ENCODE measurements at regions of chr17 and their contacts with region 1.

Region 1: GRCh38 chr17:35088881-35089585 is 25.5 kb upstream of the RFFL start:
- DNase-seq: peak; percentile 89
- H3K4me3 Mint-ChIP-seq: peak overlapping the region; percentile 86
- H3K27ac Mint-ChIP-seq: peak overlapping the region; percentile 96
- H3K4me1 Mint-ChIP-seq: peaks cover 48% of the 10 kb centered on the region
- H3K27me3 Mint-ChIP-seq: no peaks in the 10 kb centered on the region

Region 2: GRCh38 chr17:34913001-34913400 is 176.0 kb before region 1 on chr17:
- CTCF ChIA-PET with region 1: no interaction called
- intact Hi-C with region 1: no loop called
- DNase-seq: no peak
- H3K4me3 Mint-ChIP-seq: no peak overlapping the region
- H3K27ac Mint-ChIP-seq: no peak overlapping the region
- H3K4me1 Mint-ChIP-seq: no peaks in the 10 kb centered on the region
- H3K27me3 Mint-ChIP-seq: no peaks in the 10 kb centered on the region

Region 3: DNA sequence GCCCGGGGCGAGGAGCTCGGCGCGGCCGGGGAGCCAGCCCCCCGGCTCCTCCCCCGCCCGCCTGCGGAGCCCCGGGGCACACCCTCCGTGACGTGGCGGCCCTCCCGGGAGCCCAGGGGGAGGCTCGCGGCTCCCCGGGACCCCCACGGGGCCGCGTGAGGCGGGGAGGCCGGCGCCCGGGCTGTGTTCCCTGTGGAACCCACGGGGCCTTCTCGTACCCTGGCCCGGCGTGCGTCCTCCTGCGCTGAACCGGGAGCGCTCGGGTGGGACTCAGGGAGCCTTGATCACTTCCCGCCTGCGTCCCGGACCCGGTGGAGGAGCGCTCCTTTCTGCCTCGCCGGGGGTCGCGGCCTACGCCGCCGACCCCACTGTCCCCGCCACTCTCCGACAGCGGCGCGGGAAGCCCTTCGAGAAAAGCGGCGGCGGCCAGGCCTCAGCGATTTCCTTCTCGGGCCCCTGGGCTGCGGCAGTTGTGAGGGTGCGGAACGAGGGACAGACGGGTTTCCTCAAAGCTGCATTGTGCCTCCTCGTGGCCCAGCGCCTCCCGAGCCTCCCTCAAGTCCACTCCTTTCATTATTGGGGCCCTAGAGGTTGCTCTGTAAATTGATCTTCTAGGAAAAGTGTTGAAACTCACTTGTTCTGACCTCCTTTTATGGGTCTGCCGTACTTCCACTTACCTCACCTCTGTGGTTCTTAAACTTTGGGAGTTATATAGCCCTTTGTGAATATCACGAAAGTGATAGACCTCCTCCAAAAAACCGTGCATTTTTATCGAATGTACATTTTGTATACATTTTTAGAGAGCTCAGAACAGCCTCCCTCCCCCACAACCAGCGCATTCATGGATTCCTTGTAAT is 108.1 kb before region 1 on chr17:
- CTCF ChIA-PET with region 1: interaction called, 6 read pairs
- intact Hi-C with region 1: loop called (anchors 1 kb)
- DNase-seq: peak; percentile 72
- H3K4me3 Mint-ChIP-seq: peak overlapping the region; percentile 95
- H3K27ac Mint-ChIP-seq: peak overlapping the region; percentile 91
- H3K4me1 Mint-ChIP-seq: peaks cover 43% of the 10 kb centered on the region
- H3K27me3 Mint-ChIP-seq: no peaks in the 10 kb centered on the region

Region 4: GRCh38 chr17:35022536-35023063 is 66.4 kb before region 1 on chr17:
- CTCF ChIA-PET with region 1: interaction called, 15 read pairs
- intact Hi-C with region 1: loop called (anchors 1 kb)
- DNase-seq: peak; percentile 91
- H3K4me3 Mint-ChIP-seq: peak overlapping the region; percentile 81
- H3K27ac Mint-ChIP-seq: peak overlapping the region; percentile 98
- H3K4me1 Mint-ChIP-seq: peaks cover 35% of the 10 kb centered on the region
- H3K27me3 Mint-ChIP-seq: no peaks in the 10 kb centered on the region

Region 5: GRCh38 chr17:35063514-35064223 is 25.4 kb before region 1 on chr17 and contains the start of gene RFFL:
- CTCF ChIA-PET with region 1: interaction called, 9 read pairs
- intact Hi-C with region 1: loop called (anchors 1 kb)
- DNase-seq: peak; percentile 97
- H3K4me3 Mint-ChIP-seq: peak within 1 kb of the TSS; percentile 23
- H3K27ac Mint-ChIP-seq: peak within 1 kb of the TSS; percentile 65
- H3K4me1 Mint-ChIP-seq: peaks cover 57% of the 10 kb centered on the region
- H3K27me3 Mint-ChIP-seq: no peaks in the 10 kb centered on the region
- total RNA-seq, gene RFFL: 17.8 to 18.2 TPM

Region 6: DNA sequence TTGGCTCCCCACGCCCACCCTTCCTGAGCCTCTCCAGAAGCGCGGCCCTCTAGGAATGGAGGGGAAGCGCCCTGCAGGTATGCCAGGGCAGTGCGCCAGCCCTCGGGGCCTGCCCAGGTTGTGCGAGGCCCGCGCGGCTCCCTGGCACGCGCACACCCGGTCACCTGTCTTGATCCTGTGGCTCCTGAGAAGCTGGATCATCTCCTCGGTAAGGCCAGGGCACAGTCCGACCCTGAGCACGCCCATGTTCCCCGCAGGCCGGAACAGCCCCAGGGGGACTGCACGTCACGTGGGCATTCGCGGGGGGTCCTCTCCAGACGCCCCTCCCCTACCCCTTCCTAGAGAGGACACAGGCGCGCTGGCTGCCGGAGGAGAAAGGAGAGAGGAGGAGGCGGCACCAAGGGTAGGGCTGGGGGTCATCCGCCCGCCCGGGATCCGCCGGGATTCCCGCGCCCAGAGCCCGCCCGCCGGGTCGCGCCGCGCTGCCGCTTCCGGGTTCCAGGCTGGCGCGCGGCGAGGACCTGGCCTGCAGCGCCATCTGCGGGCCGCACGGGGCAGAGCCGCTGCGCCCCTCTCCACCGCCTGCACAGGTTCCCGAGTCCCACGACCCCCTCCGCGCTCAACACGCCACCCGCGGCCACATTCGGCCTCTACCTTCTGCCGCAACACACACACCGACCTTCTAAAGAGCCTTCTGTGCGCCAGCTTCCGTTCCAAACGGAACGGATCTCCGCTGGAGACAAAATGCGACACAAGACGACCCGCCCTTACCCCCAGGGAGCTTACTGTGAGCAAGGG is 30.5 kb after region 1 on chr17 and contains the start of gene RAD51D:
- CTCF ChIA-PET with region 1: interaction called, 20 read pairs
- intact Hi-C with region 1: loop called (anchors 1 kb)
- DNase-seq: peak; percentile 78
- H3K4me3 Mint-ChIP-seq: peak within 1 kb of the TSS; percentile 90
- H3K27ac Mint-ChIP-seq: peak within 1 kb of the TSS; percentile 86
- H3K4me1 Mint-ChIP-seq: peaks cover 42% of the 10 kb centered on the region
- H3K27me3 Mint-ChIP-seq: no peaks in the 10 kb centered on the region
- total RNA-seq, gene RAD51D: 31.5 to 33.0 TPM

Region 7: DNA sequence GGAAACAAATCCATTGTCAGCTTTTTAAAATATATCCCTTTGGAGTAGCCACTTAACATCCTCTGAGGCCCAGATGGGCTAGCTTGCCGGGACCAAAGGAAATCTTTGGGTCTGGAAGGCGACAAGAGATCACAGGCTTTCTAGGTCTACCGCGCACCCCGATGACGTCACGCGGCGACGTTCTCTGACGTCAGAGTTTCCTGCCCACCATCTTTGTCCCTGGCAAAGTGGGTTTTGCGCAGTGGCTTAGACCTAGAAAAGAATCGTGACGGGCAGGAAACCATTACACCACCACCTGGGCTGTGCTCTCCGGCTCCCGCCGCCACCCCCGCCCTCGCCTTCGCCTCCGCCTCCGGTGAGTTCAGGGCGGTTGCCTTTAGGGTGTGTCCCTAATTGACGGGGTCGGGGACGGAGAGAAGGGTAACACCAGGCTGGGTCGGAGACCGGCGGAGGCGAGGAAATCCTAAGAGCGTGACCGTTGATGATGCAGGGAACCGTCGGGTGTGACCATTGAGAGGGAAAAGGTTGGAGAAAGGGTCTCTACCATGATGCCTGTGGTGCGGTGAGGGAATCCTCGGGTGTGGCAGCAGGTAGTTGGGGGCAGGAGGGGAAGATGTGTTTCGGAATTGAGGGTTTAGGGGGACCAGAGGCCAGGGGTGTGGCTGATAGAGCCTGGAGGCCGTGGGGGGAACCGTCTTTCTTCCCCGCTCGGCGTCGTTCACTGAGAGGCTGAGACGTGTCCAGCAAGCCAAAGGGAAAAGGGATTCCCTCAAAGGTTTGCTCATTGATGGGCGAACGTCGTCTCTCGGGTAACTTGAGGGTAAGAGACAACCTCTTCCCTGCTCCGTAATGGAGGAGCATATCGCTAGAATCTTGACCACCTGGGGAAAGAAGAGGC is 498.3 kb after region 1 on chr17 and contains the start of gene AP2B1:
- CTCF ChIA-PET with region 1: no interaction called
- intact Hi-C with region 1: loop called (anchors 2 kb)
- DNase-seq: peak; percentile 97
- H3K4me3 Mint-ChIP-seq: peak within 1 kb of the TSS; percentile 97
- H3K27ac Mint-ChIP-seq: peak within 1 kb of the TSS; percentile 97
- H3K4me1 Mint-ChIP-seq: peaks cover 29% of the 10 kb centered on the region
- H3K27me3 Mint-ChIP-seq: no peaks in the 10 kb centered on the region
- total RNA-seq, gene AP2B1: 158 to 172 TPM